ENCODE measurements at regions of chr20 and their contacts with region 1.

Region 1: GRCh38 chr20:44125332-44126127 is 61.5 kb downstream of the JPH2 start:
- DNase-seq: no peak
- ATAC-seq: no peak
- H3K4me3 ChIP-seq: no peak overlapping the region
- H3K27ac ChIP-seq: no peak overlapping the region
- H3K4me1 ChIP-seq: peaks cover 5% of the 10 kb centered on the region
- H3K27me3 ChIP-seq: no peaks in the 10 kb centered on the region

Region 2: DNA sequence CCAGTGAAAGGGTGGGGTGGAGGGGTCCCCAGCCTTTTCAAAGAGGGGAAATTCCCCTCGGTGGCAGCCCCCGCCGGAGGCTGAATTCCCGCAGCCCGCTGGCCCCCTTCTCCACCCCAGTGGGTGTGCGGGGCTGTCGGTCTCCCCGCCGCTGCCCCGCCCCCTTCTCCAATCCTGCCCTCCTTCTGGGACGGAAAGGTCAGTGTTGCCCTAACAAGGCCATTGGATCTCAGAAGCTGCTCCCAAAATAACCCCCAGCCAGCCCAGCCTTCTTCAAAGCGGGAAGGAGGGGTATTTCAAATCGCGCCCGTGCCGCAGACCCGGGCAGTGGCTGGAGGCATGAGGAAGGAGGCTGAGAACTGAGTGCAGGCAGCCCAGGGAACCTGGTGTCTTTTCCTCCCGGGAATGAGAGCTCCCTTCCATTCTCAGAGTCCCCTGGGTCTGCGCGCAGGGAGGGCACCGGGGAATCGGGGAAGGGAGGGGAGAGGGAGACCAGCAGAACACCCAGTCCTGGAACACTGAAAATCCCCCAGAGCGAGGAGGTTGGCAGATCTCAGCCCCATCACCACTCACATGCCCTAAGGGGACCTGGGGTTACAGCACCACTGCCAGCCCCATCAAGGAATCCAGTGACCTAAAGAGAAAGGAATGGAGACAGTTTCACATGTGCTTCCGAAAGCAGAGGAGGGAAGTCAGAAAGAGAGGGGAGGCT is 61.7 kb after region 1 on chr20 and contains the start of gene JPH2:
- intact Hi-C with region 1: loop called in 1 of 4 experiments (anchors 2 kb)
- DNase-seq: peak; percentile 58 to 83 (median 80)
- ATAC-seq: peak; percentile 83 to 87
- H3K4me3 ChIP-seq: peak within 1 kb of the TSS; percentile 60
- H3K27ac ChIP-seq: peak within 1 kb of the TSS; percentile 98
- H3K4me1 ChIP-seq: peaks cover 3% of the 10 kb centered on the region
- H3K27me3 ChIP-seq: no peaks in the 10 kb centered on the region
- total RNA-seq, gene JPH2: 99.0 to 117 (median 107) TPM

Region 3: DNA sequence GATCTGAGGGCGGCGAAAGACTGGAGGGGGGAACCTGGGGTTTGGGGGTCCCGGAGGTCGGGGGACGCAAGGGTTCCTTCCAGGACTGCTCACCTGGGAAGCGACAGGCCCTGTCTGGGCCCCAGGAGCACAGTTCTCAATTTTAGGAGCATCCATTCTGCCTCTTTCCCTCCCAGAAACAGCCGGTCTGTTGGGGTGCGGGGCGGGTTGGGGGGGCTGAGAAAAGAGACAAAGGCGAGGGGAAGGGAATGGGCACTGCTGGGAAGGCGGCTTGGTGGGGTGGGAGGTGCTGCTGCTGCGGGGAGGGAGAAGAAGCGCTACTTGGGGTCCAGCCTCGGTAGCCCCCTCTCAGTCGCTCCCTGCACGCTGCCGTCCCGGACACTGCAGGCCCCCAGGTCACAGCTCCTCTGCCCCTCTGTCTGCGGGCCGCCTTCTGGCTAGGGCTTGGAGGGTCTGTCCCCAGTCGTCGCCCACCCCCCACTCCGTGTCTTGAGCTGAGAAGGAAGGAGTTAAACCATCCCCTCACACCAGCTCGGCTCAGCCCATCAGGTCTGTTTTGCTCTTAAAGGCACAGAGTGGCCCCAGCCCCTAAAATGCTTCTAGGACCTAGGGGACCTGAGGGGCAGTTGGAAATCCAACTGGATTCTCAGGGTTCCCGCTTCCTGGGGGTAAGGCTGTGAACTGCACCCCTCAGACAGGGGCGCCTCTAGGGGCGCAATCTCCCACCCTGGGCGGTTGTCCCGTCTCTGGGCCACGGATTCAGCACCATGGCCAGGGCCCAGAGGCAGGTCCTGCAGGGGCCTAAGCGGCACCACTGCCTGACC is 122.3 kb after region 1 on chr20:
- intact Hi-C with region 1: no loop called
- DNase-seq: peak; percentile 46 to 77 (median 75)
- ATAC-seq: peak; percentile 73 to 75
- H3K4me3 ChIP-seq: peak overlapping the region; percentile 45
- H3K27ac ChIP-seq: no peak overlapping the region
- H3K4me1 ChIP-seq: no peaks in the 10 kb centered on the region
- H3K27me3 ChIP-seq: no peaks in the 10 kb centered on the region